ENCODE measurements at regions of chr21 and their contacts with region 1.

Region 1: DNA sequence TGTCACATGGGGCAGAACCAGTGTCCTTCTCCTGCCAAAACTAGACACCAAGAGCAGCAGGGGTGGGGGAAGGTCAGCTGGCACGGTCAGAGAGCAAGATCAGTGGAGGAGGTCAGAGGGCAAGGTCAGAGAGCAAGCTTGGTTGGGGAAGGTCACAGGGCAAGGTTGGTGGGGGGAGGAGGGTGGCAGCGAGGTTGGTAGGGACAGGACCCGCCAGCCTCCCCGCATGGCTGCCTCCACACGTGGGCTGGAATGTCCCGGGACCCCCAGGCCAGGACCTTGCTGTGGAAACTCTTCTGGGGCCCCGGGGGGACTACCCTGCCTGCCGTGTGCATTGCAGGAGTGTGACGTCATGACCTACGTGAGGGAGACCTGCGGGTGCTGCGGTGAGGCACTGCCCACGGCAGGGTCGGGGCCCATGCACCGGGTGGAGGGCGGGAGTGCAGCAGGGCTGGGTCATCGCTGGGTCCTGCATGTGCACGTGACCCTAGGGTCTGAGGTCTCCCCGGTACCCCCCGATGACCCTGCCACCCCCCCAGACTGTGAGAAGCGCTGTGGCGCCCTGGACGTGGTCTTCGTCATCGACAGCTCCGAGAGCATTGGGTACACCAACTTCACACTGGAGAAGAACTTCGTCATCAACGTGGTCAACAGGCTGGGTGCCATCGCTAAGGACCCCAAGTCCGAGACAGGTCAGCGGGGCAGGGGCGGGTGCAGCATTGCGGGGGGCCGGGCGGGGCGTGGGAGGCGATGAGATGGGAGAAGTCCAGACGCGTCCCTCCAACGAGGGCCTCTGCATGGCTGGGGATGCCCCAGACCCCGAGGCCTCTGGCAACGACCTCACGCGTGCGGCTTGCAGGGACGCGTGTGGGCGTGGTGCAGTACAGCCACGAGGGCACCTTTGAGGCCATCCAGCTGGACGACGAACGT is 27.3 kb downstream of the COL6A2 start:
- DNase-seq: no peak
- ATAC-seq: no peak
- H3K4me3 ChIP-seq: no peak overlapping the region
- H3K27ac ChIP-seq: no peak overlapping the region
- H3K4me1 ChIP-seq: no peaks in the 10 kb centered on the region
- H3K27me3 ChIP-seq: no peaks in the 10 kb centered on the region
- CTCF ChIP-seq: no peak

Region 2: DNA sequence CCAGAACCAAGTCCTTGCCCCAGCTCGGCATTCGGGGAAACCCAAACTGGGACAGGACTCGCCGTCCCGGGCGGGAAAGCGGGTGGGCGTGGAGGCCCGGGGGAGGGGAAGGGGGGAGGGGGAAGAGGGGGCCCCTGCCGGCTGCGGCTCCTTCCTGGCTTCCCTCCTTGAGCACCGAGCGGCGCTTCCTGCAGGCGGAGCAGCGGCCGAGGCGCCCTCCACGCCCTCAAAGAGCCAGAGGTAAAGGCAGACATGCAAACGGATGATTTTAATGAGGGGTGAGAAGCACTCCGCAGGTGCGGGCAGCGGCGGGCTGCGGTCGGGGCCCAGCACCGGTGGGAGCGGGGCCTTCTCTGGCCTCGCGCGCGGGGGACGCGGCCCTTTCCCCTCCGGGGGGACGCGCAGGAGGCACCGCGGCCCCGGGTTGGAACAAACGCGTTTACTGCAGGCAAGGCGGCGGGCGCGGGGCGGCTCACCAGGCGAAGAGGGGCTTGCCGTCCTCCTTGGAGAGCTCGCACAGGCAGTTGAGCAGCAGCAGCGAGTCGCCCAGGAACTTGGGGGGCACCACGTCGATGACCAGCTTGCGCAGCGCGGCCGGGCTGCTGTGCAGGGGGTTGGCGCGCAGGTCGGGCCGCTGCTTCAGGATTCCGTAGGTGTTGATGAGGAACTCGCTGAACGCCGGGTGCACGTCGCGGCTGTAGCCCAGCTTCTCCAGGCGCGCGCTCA is 35.9 kb after region 1 on chr21:
- CTCF ChIA-PET with region 1: no interaction called
- POLR2A ChIA-PET with region 1: no interaction called
- in situ Hi-C with region 1: no loop called
- intact Hi-C with region 1: no loop called
- DNase-seq: no peak
- ATAC-seq: 0 out of 2 replicates have a peak, but pooled peaks have one; percentile 32
- H3K4me3 ChIP-seq: no peak overlapping the region
- H3K27ac ChIP-seq: no peak overlapping the region
- H3K4me1 ChIP-seq: no peaks in the 10 kb centered on the region
- H3K27me3 ChIP-seq: no peaks in the 10 kb centered on the region
- CTCF ChIP-seq: no peak

Region 3: GRCh38 chr21:46469275-46469674 is 344.1 kb after region 1 on chr21:
- CTCF ChIA-PET with region 1: no interaction called
- POLR2A ChIA-PET with region 1: interaction called, 14 read pairs
- in situ Hi-C with region 1: no loop called
- intact Hi-C with region 1: no loop called
- DNase-seq: no peak
- ATAC-seq: no peak
- H3K4me3 ChIP-seq: no peak overlapping the region
- H3K27ac ChIP-seq: no peak overlapping the region
- H3K4me1 ChIP-seq: no peaks in the 10 kb centered on the region
- H3K27me3 ChIP-seq: no peaks in the 10 kb centered on the region
- CTCF ChIP-seq: no peak

Measured in Panc1 (cell line).